ENCODE measurements at regions of chr1 and their contacts with region 1.

Region 1: DNA sequence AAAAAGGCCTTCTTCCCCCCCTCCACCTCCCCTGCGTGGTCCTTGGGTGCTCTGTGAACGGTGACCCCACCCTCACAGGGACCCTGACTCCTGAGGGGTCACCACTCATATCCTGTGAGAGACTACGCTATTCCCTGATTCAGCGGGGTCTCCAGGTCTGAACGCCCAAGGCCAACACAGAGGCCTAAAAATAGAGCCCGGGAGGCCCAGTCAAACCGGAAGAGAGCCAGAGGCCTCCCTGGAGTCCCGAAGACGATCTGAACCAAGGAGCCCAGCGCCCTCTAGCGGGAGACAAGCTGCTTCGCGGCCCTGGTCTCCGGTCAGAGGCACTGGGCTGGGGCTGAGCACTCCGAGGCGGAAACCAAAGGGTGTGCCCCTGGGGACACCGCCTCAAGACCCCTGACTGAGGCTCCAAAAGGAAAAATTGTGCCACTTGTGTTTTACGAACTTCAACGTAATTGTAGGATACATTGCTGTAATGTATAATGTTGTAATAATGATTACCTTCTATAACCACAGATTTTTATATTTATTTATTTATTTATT is 42.4 kb upstream of the PSEN2 start:
- DNase-seq: peak; percentile 88 to 94 (median 92)
- H3K4me3 ChIP-seq: peak overlapping the region in 42 of 59 donors; percentile 0 to 54 (median 26)
- H3K27ac ChIP-seq: peak overlapping the region in 57 of 59 donors; percentile 2 to 92 (median 77)
- H3K27me3 ChIP-seq: no peaks in the 10 kb centered on the region
- CTCF ChIP-seq: peak; percentile 88 to 100 (median 98)

Region 2: DNA sequence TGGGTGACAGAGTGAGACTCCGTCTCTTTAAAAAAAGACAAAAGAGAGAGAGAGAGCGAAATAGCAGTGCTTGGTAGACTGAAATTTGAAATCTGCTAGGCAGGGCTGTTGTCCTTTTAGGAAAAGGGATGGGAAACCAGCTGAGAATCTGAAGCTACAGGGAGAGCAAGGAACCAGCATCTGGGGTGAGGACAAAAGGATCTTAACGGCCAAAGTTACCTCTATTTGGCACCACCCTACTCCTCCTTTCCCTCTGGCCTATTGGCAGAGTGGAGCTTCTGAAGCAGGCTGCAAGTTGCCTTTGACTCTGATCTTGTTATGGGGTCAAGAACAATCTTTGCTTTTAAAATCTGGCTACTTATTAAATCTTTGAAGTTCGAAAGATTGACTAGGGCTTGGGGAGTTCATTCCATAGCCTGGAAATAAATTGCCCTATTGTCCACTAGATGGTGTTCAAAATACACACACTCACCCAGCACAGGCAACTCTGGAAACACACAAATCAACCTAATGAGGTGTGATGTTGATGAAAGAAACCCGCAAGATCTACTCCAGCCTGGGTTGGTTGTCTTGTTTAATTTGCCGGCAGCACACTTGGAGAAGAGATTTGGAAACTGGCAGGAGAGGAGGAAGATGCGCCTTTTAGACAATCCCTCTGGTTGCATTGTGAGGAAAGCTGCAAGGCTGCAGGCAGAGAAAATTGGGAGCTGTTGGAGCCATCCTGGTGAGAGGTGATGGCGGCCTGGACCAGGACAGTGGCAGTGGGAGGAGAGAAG is 403.6 kb before region 1 on chr1:
- intact Hi-C with region 1: loop called in 1 of 2 experiments (anchors 10 kb)
- DNase-seq: peak in 2 of 10 donors; percentile 24 to 31
- H3K4me3 ChIP-seq: no peak overlapping the region
- H3K27ac ChIP-seq: peak overlapping the region in 1 of 59 donors; percentile 32
- H3K27me3 ChIP-seq: no peaks in the 10 kb centered on the region
- CTCF ChIP-seq: peak; percentile 51 to 87 (median 71)

Region 3: GRCh38 chr1:226547754-226548191 is 280.3 kb before region 1 on chr1:
- intact Hi-C with region 1: loop called in 1 of 2 experiments (anchors 5 kb)
- DNase-seq: peak; percentile 59 to 85 (median 78)
- H3K4me3 ChIP-seq: peak overlapping the region in 41 of 59 donors; percentile 14 to 73 (median 66)
- H3K27ac ChIP-seq: peak overlapping the region in 2 of 59 donors; percentile 11 to 63
- H3K27me3 ChIP-seq: peaks cover 0 to 6% (median 0%) of the 10 kb centered on the region in 45 donors
- CTCF ChIP-seq: peak; percentile 59 to 88 (median 76)

Region 4: GRCh38 chr1:226702957-226703831 is 124.8 kb before region 1 on chr1:
- intact Hi-C with region 1: loop called (anchors 5 to 10 kb)
- DNase-seq: peak; percentile 52 to 90 (median 68)
- H3K4me3 ChIP-seq: peak overlapping the region; percentile 52 to 87 (median 72)
- H3K27ac ChIP-seq: peak overlapping the region; percentile 90 to 100 (median 99)
- H3K27me3 ChIP-seq: no peaks in the 10 kb centered on the region
- CTCF ChIP-seq: peak in 33 of 56 donors; percentile 1 to 55 (median 25)

Region 5: GRCh38 chr1:226736908-226737818 is 90.9 kb before region 1 on chr1:
- intact Hi-C with region 1: loop called (anchors 1 to 5 kb)
- DNase-seq: peak; percentile 59 to 82 (median 73)
- H3K4me3 ChIP-seq: peak overlapping the region; percentile 62 to 97 (median 89)
- H3K27ac ChIP-seq: peak overlapping the region; percentile 92 to 100 (median 98)
- H3K27me3 ChIP-seq: no peaks in the 10 kb centered on the region
- CTCF ChIP-seq: peak in 36 of 56 donors; percentile 1 to 52 (median 32)

Region 6: GRCh38 chr1:226786550-226786949 is 41.5 kb before region 1 on chr1:
- intact Hi-C with region 1: loop called (anchors 2 kb)
- DNase-seq: no peak
- H3K4me3 ChIP-seq: peak overlapping the region in 1 of 59 donors; percentile 15
- H3K27ac ChIP-seq: peak overlapping the region in 56 of 59 donors; percentile 18 to 97 (median 78)
- H3K27me3 ChIP-seq: no peaks in the 10 kb centered on the region
- CTCF ChIP-seq: no peak

Region 7: DNA sequence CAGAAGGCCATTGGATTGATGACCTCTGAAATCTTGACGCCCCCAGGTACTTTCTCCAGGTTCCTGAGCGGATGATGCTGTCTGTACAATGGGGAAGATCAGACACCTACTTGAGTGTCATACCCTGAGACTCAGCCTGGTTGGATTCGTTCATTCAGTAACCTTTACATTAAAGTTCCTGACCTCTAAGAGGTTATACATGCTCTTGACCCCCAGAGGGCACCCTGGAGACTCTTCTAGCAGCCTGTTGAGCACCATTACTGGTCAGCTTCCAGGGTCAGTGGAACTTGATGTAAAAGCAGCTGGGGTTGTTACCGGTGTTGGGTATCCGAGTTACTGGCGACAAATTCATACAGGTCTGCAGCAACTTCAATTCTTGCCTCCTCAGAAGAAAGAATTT is 621.0 kb after region 1 on chr1:
- intact Hi-C with region 1: loop called in 1 of 2 experiments (anchors 10 kb)
- DNase-seq: no peak
- H3K4me3 ChIP-seq: no peak overlapping the region
- H3K27ac ChIP-seq: no peak overlapping the region
- H3K27me3 ChIP-seq: peaks cover 0 to 6% (median 0%) of the 10 kb centered on the region in 45 donors
- CTCF ChIP-seq: peak in 28 of 56 donors; percentile 11 to 40 (median 22)